ENCODE measurements at regions of chr1 and their contacts with region 1.

Region 1: DNA sequence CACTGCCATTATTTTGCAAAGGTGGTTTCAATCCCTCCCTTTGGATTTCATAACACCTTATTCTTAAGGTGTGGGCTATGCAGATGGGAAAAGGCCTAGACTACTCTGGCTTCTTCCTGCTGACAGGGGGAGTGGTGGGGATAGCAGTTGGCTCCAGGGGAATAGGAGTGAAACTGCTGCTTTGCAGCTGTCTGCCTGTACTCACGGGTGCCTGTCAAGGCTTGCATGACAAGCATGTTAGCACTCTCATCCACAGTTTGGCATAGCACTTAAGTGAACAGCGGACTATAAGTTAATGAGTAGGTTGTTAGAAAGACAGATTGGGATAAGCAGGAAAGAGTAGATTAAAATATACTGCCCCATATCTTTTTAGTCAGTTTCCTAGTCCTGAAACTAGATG is 287.5 kb upstream of the DAB1 start:
- ATAC-seq: peak in 6 of 8 experiments; percentile 20 to 91 (median 58)
- H3K4me3 ChIP-seq: no peak overlapping the region
- H3K27ac ChIP-seq: no peak overlapping the region
- H3K4me1 ChIP-seq: peaks cover 2 to 5% of the 10 kb centered on the region in 2 donors

Region 2: GRCh38 chr1:57824535-57824934 is 113.2 kb after region 1 on chr1:
- in situ Hi-C with region 1: loop called in 1 of 9 experiments (anchors 25 kb)
- ATAC-seq: peak in 4 of 8 experiments; percentile 31 to 90 (median 78)
- H3K4me3 ChIP-seq: no peak overlapping the region
- H3K27ac ChIP-seq: no peak overlapping the region
- H3K4me1 ChIP-seq: peaks cover 26 to 28% of the 10 kb centered on the region in 2 donors